Left cardiac atrium (tissue), 4 donors: ENCODE measurements at regions of chr2 and their contacts with region 1.

Region 1: DNA sequence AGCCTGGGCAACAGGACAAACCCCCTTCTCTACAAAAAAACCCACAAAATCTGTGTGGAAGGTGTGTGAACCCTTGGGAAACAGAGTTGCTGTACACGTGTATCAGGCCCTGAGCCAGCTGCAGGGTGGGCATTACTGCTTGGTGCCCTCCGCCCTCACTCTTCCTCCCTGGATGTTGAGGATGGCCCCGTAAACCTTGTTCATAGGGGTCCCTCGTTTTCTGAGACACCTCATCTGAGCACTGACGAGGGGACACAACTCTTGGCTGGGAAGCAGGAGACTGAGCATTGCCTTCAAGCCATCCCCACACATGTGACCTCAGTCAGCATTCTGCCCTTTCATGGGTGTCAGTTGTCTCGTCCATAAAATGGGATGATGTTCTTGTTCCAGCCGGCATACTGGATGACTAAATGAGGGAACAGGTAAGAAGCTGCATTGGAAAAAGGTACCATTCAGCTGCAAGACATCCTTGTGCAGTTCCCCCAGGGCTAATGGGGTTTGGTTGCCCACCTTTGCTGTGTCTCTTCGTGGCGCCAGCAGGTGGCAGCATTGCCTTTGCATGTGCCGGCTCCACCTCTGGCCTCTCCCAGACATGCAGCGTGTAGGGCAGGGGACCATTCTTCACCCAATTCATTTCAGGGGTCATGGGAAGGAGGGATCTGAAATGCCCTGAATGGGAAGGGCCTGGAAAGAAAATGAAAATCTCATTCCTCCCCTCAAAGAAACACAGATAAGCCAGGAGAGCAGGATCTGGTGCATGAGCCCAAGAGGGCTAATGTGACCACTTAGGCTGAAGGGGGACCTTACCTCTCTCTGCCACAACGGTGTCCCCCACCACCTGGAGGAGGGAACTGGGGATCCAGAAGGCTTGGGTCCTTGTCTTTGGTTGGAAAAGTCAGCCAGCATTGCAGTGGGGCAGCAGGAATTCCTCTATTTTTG is 36.4 kb upstream of the HAAO start:
- DNase-seq: peak; percentile 80
- ATAC-seq: peak; percentile 92 to 94

Region 2: GRCh38 chr2:42153944-42154581 is 674.7 kb before region 1 on chr2:
- intact Hi-C with region 1: no loop called
- DNase-seq: no peak
- ATAC-seq: no peak

Region 3: DNA sequence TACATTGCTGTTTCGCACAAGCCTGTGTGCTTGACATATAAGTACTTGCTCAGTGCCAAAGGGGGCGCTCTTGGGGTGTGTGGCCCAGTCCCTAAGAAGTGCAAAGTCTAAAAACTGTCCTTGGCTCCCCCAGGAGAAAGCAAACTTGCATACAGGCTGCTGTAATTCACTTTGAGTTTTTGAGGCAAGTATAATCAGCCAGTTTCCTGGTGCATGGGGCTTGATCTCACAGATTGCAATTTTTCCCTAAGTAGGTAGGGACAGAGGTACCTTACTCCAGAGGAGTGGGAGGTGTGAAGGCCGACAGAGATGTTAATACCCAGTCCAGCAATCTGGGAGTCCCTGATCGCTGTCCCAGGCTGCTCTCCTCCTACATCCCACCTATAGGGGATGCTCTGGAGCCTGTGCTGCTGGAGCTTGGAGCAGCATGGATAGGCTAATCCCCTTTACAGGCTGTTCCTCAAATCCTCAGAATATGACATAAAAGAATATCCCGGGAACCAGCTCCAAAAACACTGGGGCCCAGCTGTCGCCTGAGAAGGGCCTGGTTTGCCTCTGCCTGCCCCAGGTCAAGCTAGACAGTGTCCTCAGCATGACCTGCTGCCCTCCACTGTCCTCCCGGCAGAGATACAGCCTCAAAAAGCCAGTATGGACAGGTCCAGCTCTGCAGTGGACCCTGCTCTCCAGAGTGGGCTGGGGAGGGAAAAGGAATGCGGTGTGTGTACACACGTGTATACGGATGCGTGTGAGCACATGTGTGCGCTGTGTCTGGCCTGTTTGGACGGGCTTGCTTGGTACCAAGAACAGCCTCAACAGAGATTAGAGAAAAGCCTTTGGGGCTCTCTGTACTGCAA is 100.2 kb after region 1 on chr2:
- intact Hi-C with region 1: loop called in 1 of 2 experiments (anchors 5 kb)
- DNase-seq: peak; percentile 24
- ATAC-seq: no peak

Region 4: DNA sequence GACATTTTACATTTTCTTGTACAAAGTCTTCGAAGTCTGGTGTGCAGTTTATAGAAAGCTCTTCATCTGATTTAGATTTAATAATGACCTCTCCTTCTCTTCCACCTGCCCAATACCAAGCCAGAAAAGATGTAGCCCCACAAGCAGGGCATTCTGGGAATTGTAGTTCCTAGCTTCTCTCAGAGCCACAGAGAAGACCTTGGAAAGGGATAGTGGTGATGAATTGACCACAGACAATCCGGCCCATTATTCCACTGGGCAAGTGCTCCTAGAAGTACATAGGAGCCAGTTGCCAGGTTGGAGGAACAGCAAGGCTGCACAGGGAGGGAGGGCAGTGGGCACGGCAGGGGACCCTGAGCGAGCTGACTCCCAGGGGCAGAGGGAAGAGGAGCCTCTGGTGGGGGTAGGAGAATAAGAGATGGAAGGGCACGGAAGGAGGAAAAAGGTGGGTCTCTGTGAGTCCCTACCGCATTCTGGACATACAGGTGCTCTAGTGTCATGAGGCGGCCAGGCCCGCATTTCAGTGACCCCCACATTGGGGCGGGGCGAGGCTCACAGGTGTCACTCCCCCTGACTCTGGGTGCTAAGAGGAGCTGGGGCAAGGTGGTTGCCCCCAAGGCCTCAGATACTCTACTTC is 116.1 kb after region 1 on chr2:
- intact Hi-C with region 1: loop called (anchors 5 to 10 kb)
- DNase-seq: no peak
- ATAC-seq: no peak

Region 5: DNA sequence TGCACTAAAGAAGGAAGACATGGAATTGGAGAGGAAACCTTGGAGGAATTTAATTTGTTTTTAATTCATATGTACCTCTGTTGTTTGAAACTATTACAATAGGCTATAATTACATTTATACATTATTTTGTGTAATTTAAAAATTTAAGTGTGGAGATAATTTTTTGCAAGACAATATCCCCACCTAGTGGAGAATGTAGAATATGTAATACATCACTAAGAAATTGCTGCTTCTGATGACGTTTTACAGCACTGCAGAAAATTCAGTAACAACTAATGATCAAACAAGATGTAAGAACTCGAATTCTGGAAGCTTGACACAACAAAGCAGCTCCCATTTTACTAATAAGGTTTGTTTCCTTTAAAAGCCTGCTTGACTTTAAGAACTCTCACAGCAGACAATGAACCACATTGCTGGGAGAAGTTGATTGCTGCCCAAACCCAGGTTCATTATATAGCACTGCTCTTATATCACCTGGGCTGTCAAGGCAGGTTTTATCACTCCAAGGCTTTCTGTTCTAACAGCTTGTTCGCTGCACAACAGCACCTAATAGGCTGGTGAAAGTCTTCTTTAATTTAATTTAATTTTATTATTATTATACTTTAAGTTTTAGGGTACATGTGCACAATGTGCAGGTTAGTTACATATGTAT is 713.7 kb after region 1 on chr2:
- intact Hi-C with region 1: loop called in 1 of 2 experiments (anchors 5 kb)
- DNase-seq: no peak
- ATAC-seq: no peak